Activated CD4-positive, alpha-beta memory T cell treated with anti-CD3 and anti-CD28 coated beads for 36 hours (primary cell): ENCODE measurements at regions of chr5 and their contacts with region 1.

Region 1: DNA sequence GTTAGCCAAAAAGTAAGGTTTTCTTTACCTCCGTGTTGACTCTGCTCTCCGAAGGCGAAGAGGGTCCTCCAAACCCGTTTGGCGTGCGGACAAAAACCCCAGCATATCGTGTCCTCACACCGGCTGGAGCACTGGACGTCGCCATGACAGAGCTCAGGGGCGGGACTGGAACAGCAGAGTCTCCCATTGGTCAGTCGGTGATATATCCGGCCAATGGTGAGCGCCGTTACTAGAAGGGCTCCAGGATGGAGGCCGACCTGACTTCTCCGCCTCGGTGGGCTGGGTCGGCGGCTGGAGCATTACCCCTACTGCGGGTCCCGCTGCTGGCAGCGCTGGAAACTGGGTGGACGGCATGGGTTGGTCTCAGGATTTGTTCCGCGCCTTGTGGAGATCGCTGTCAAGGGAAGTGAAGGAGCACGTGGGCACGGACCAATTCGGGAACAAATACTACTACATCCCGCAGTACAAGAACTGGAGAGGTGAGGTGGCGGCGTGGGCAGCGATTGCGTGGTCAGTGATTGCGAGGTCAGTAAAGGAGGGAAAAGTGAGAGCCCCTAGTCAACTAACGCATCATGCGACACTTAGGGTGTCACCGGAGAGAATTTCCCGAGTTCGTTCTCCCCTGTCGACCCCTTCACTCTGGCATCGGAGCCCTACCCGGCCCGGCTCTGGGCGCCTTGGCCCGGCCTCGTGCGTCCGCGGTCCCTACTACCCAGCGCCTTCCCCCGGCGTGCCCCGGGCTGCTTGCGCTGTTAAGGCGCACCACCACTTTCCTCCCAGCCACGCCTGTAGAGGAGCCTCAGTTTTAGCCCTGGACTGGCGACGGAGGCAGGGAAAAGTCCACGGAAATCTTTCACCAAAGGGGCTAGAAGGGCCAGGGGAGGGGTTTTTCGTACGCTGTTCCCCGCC is at the starts of genes ERCC8 and NDUFAF2:
- DNase-seq: peak; percentile 93
- H3K4me3 Mint-ChIP-seq: no peak within 1 kb of the TSS
- H3K27ac Mint-ChIP-seq: peak within 1 kb of the TSS; percentile 77
- H3K4me1 Mint-ChIP-seq: peaks cover 23% of the 10 kb centered on the region
- H3K27me3 Mint-ChIP-seq: no peaks in the 10 kb centered on the region
- total RNA-seq, gene ERCC8: 7.7 to 9.1 TPM
- total RNA-seq, gene NDUFAF2: 35.6 to 38.4 TPM

Region 2: GRCh38 chr5:60699530-60700382 is 245.4 kb before region 1 on chr5 and contains the start of gene DEPDC1B:
- CTCF ChIA-PET with region 1: no interaction called
- POLR2A ChIA-PET with region 1: interaction called, 4 read pairs
- intact Hi-C with region 1: loop called (anchors 1 kb)
- DNase-seq: peak; percentile 93
- H3K4me3 Mint-ChIP-seq: peak within 1 kb of the TSS; percentile 87
- H3K27ac Mint-ChIP-seq: peak within 1 kb of the TSS; percentile 72
- H3K4me1 Mint-ChIP-seq: peaks cover 18% of the 10 kb centered on the region
- H3K27me3 Mint-ChIP-seq: no peaks in the 10 kb centered on the region
- total RNA-seq, gene DEPDC1B: 33.2 to 33.6 TPM

Region 3: DNA sequence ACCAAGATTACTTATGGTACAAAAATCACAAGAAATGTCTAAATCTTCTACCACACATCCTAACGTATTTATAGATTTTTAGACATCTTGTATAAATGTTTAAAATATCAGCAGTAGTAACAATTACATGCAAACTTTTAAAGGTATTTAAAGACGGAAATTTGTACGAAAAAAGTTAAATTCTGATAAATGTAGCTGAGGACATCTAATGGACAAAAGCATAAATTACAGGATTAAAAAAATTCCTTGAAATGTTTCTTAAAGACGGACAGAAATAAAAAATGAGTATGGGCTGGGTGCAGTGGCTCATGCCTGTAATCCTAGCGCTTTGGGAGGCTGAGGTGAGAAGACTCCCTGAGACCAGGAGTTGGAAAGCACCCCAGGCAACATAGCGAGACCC is 16.1 kb before region 1 on chr5:
- CTCF ChIA-PET with region 1: no interaction called
- POLR2A ChIA-PET with region 1: no interaction called
- intact Hi-C with region 1: no loop called
- DNase-seq: no peak
- H3K4me3 Mint-ChIP-seq: no peak overlapping the region
- H3K27ac Mint-ChIP-seq: no peak overlapping the region
- H3K4me1 Mint-ChIP-seq: no peaks in the 10 kb centered on the region
- H3K27me3 Mint-ChIP-seq: no peaks in the 10 kb centered on the region

Region 4: GRCh38 chr5:60972231-60972630 is 27.1 kb after region 1 on chr5:
- CTCF ChIA-PET with region 1: no interaction called
- POLR2A ChIA-PET with region 1: no interaction called
- intact Hi-C with region 1: loop called (anchors 1 kb)
- DNase-seq: peak; percentile 73
- H3K4me3 Mint-ChIP-seq: no peak overlapping the region
- H3K27ac Mint-ChIP-seq: no peak overlapping the region
- H3K4me1 Mint-ChIP-seq: peaks cover 14% of the 10 kb centered on the region
- H3K27me3 Mint-ChIP-seq: no peaks in the 10 kb centered on the region

Region 5: DNA sequence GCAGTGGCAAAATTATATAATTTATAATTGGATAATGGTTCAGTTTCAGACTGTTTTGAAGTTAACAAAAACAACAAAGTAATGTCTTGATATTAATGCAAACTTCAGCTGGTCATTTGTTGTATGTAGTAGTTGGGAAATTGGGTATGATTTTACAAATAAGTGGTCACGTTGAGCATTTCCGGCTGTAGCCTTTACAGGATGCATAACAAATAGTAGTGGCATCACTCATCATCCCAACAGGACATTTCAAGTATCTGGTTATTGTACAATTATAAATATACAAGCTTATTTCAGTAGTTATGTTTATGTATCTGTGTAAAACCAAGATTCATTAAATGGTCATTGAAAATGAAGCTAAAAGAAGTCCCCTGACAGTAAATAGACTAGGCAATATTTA is 144.2 kb after region 1 on chr5:
- CTCF ChIA-PET with region 1: no interaction called
- POLR2A ChIA-PET with region 1: no interaction called
- intact Hi-C with region 1: no loop called
- DNase-seq: no peak
- H3K4me3 Mint-ChIP-seq: no peak overlapping the region
- H3K27ac Mint-ChIP-seq: no peak overlapping the region
- H3K4me1 Mint-ChIP-seq: no peaks in the 10 kb centered on the region
- H3K27me3 Mint-ChIP-seq: no peaks in the 10 kb centered on the region